ENCODE measurements at regions of chr15 and their contacts with region 1.

Region 1: GRCh38 chr15:93341164-93341563 is 252.2 kb upstream of the RGMA start:
- DNase-seq: no peak
- ATAC-seq: no peak
- H3K4me3 ChIP-seq: no peak overlapping the region
- H3K27ac ChIP-seq: no peak overlapping the region
- H3K4me1 ChIP-seq: no peaks in the 10 kb centered on the region
- CTCF ChIP-seq: no peak
- EP300 ChIP-seq: no peak
- POLR2A ChIP-seq: no peak
- RAD21 ChIP-seq: no peak

Region 2: GRCh38 chr15:93358166-93359059 is 17.2 kb after region 1 on chr15:
- CTCF ChIA-PET with region 1: interaction called, 3 read pairs
- POLR2A ChIA-PET with region 1: interaction called, 13 read pairs
- DNase-seq: no peak
- ATAC-seq: no peak
- H3K4me3 ChIP-seq: no peak overlapping the region
- H3K27ac ChIP-seq: no peak overlapping the region
- H3K4me1 ChIP-seq: no peaks in the 10 kb centered on the region
- CTCF ChIP-seq: no peak
- EP300 ChIP-seq: no peak
- POLR2A ChIP-seq: no peak
- RAD21 ChIP-seq: no peak